Aorta (tissue), 5 donors: ENCODE measurements at regions of chr1 and their contacts with region 1.

Region 1: DNA sequence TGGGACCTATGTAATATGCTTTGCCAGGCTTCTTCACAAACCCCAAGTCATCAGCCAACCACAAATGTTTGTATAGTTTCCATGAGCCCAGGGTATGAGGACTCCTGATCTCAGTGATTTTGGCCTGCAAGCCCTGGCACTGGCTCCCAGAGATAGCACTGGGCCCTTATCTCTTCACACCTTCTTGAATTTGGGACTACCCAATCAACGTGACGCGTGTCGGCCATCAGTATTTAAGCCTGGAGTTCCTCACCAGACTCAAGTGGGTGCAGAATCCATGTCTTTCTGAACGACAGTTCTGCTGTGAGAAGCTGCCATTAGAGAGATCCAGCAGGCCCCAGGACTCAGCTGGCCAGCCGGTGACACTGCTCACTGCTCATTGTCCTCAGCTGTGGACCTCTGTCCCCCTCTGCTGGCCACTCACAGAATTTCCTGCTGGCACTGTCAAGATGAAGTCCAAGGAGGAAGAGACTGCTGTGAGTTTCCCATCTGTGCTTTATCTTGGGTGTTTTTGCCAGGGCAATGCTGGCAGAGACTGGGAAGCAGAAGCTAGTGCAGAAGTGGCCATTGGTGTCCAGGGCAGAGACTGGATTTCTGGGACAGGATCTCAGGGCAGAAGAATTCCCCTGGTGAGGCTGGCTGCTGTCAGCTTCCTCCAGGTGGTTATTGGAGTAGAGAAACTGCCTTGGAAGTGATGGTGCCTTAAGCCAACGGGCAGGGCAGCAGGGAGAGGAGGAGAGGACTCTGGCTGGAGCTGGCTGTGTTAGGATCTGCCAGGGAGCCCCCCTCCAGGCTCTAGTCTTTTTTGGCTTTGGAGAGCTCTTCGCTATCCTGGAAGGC is 28.4 kb downstream of the TMCC2 start:
- DNase-seq: peak; percentile 94 to 95
- ATAC-seq: peak; percentile 93
- H3K4me3 ChIP-seq: no peak overlapping the region
- H3K27ac ChIP-seq: peak overlapping the region in 1 of 2 donors; percentile 4
- H3K4me1 ChIP-seq: no peaks in the 10 kb centered on the region
- H3K27me3 ChIP-seq: no peaks in the 10 kb centered on the region

Region 2: GRCh38 chr1:204989266-204990058 is 266.7 kb before region 1 on chr1:
- intact Hi-C with region 1: loop called in 1 of 2 experiments (anchors 10 kb)
- DNase-seq: no peak
- ATAC-seq: peak; percentile 82
- H3K4me3 ChIP-seq: no peak overlapping the region
- H3K27ac ChIP-seq: no peak overlapping the region
- H3K4me1 ChIP-seq: no peaks in the 10 kb centered on the region
- H3K27me3 ChIP-seq: no peaks in the 10 kb centered on the region

Region 3: DNA sequence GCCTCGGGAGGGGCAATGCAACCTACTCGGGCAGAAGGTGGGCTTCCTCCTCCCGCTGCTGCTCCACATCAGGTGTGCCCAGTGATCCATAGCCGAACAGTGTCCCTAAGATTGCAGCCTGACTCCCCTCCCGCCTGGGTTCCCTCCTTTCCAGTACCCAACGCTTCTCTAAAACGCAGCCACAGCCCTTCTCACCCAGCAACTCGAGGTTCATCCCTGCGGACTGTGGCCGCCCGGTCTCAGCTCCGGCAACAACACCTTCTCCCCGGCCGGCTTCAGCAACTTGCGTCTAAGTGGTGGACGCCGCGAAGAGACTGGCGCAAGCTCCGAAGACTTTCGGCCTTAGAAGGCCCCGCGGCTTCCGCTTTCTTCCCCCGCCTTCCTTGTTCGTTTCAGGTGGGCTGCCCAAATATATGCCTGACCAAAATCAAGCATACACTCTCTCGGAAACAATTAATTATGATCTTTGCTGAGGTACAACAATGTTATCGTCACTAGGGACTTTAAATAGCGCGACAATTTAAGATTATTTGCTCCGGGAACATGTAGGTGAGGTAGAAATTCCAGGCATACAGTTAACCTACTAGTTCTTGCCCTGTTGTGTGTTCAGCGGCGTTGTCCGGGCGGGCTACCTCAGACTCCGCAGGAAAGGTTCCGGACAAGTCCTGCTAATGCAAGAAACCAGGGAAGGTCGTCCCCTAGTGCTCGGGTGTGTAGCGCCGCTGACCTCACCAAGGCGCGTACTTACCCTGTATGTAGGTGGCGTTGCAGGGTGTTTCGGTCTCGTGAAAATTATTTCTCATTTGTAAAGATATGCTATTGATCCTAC is 134.3 kb before region 1 on chr1 and contains the start of gene RBBP5:
- intact Hi-C with region 1: loop called in 1 of 2 experiments (anchors 5 kb)
- DNase-seq: peak; percentile 96 to 97
- ATAC-seq: peak; percentile 99
- H3K4me3 ChIP-seq: peak within 1 kb of the TSS; percentile 80 to 85
- H3K27ac ChIP-seq: peak within 1 kb of the TSS; percentile 27 to 29
- H3K4me1 ChIP-seq: peaks cover 0 to 3% of the 10 kb centered on the region in 2 donors
- H3K27me3 ChIP-seq: no peaks in the 10 kb centered on the region
- total RNA-seq, gene RBBP5: 9.9 to 15.4 TPM

Region 4: GRCh38 chr1:205141236-205142101 is 114.7 kb before region 1 on chr1:
- intact Hi-C with region 1: loop called (anchors 5 kb)
- DNase-seq: peak; percentile 83 to 87
- ATAC-seq: peak; percentile 85
- H3K4me3 ChIP-seq: no peak overlapping the region
- H3K27ac ChIP-seq: no peak overlapping the region
- H3K4me1 ChIP-seq: no peaks in the 10 kb centered on the region
- H3K27me3 ChIP-seq: no peaks in the 10 kb centered on the region

Region 5: DNA sequence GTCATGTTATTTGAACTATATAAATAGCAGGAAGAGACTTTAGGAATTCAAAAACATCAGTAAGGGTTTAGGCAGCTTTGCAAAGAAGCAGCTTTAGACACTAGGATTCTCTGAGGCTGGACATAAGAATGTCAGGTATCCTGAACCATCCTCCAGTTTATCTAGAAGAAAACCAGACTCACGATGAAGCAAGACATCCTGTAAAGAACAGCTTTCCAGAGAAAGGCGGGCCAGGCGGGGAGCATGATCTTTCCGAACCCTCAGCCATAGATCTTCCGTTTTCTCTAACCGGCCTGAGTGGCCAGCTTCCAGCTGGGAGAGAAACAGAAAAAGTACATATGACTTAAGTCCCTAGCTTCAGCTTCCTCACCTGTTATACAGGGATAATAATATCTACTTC is 95.1 kb before region 1 on chr1:
- intact Hi-C with region 1: no loop called
- DNase-seq: no peak
- ATAC-seq: no peak
- H3K4me3 ChIP-seq: no peak overlapping the region
- H3K27ac ChIP-seq: no peak overlapping the region
- H3K4me1 ChIP-seq: no peaks in the 10 kb centered on the region
- H3K27me3 ChIP-seq: no peaks in the 10 kb centered on the region

Region 6: DNA sequence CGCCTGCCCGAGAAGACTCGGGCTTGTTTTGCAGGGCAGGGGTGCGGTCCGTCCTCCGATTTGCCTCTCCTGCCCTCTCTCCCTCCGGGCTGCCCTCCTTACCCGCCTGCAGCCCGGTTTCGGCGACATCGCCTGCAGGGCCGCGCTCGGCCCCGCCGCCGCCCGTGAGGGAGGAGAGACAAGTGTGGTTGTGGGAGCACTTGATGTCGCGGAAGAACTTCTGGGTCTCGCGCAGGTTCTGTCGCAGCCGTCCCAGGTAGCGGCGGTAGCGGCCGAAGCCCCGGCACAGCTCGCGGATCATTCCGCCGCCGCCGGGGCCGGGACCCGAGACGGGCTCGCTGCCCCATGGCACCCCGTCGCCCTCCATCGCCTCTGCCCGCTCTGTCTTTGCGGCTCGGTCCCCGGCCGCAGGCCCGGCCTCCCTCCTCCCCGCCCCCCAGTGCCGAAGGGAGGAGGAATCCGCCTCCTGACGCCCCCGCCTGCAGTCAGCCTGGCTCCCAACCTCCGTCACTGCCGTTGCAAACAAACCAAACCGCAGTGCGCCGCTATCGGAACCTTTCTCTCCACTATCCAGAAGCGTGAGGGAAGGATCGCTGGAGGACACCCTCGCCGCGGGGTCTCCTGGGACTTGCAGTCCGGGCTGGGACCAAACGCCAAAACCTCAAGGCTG is 44.9 kb before region 1 on chr1 and contains the start of gene DSTYK:
- intact Hi-C with region 1: loop called in 1 of 2 experiments (anchors 5 kb)
- DNase-seq: peak; percentile 97
- ATAC-seq: peak; percentile 98
- H3K4me3 ChIP-seq: peak within 1 kb of the TSS; percentile 74 to 75
- H3K27ac ChIP-seq: peak within 1 kb of the TSS; percentile 31 to 42
- H3K4me1 ChIP-seq: peaks cover 0 to 8% of the 10 kb centered on the region in 2 donors
- H3K27me3 ChIP-seq: no peaks in the 10 kb centered on the region
- total RNA-seq, gene DSTYK: 14.3 to 17.6 TPM

Region 7: DNA sequence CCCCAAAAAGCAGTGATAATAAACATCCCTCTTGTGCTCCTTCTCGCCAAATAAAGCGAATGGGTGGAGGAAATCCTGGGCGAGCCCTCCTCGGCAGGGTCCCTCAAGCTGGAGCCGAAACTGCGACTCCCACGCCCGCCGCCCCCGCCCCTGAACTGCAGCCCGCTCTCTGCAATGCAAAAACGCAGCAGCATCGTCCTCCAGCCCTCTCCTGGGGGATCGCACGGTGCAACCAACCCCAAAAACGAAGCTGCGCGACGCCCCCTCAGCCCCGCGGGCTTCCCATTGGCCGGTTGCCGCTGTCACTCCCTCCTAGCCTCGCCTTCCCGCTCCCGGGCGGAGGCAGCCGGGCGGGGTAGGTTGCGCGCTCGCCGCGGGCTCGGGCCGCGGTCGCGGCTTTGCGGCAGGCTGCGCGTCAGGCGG is 28.6 kb before region 1 on chr1 and contains the start of gene TMCC2:
- intact Hi-C with region 1: loop called in 1 of 2 experiments (anchors 1 kb)
- DNase-seq: peak; percentile 94 to 97
- ATAC-seq: peak; percentile 96
- H3K4me3 ChIP-seq: peak within 1 kb of the TSS; percentile 69 to 79
- H3K27ac ChIP-seq: no peak within 1 kb of the TSS
- H3K4me1 ChIP-seq: no peaks in the 10 kb centered on the region
- H3K27me3 ChIP-seq: no peaks in the 10 kb centered on the region
- total RNA-seq, gene TMCC2: 6.2 to 8.2 TPM